Caco-2 (cell line): ENCODE measurements at regions of chr5 and their contacts with region 1.

Region 1: DNA sequence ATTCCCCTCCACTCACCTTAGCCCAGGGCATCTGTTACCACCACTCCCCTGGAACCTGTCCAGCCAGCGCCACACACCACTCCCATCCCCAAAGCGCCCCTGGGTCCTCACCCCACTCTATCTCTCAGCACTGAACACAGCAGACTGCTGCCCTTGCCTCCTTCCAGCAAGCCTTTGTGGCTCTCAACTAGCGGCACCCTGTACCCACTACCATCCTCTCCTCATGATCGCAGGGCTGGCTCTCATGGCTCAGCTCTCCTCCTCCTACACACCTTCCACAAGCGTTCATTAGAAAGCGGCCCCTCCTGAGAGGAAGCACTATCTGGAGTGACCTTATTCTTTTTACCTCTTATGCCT is 13.3 kb upstream of the BASP1 start:
- DNase-seq: no peak
- H3K4me3 ChIP-seq: no peak overlapping the region
- H3K4me3 Mint-ChIP-seq: no peak overlapping the region
- H3K27ac Mint-ChIP-seq: no peak overlapping the region
- H3K4me1 ChIP-seq: no peaks in the 10 kb centered on the region
- H3K4me1 Mint-ChIP-seq: peaks cover 12% of the 10 kb centered on the region
- H3K27me3 ChIP-seq: no peaks in the 10 kb centered on the region
- H3K27me3 Mint-ChIP-seq: no peaks in the 10 kb centered on the region
- CTCF ChIP-seq: no peak

Region 2: DNA sequence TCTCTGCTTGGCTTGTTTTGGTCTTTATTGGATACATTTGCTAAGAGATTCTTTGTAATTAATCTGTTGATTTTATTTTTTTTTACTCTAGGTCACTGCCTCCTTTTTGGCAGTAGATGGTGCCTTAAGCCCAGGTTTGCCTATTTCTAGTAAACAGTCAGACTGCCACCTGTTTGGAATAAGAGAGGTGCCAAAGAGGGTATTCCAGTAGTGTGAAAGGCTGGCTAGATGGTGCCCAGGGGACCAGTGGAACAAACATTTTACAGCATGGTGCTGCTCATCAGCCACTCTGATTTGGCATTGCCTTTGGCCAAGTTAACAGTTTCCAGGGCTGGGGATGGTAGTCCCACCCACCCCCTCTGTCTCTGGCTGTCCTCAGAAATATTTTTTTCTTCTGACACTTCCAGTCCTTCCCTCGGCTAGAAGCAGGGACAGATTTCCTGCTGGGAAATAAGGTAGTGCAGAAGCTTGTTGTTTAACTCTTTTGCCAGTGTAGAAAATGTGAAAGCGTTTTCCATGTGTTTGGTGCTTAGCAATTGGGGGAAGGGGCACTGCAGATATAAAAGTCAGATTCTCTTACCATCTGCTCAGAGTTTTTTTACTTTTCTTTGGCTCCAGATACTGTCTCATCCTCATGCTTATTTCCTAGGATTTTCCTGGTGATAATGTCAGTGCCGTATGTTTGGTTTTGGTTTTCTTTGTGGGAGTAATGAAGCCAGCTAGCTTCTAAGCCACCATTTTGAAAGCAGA is 1740.7 kb before region 1 on chr5:
- CTCF ChIA-PET with region 1: no interaction called
- POLR2A ChIA-PET with region 1: no interaction called
- intact Hi-C with region 1: no loop called
- DNase-seq: no peak
- H3K4me3 ChIP-seq: no peak overlapping the region
- H3K4me3 Mint-ChIP-seq: no peak overlapping the region
- H3K27ac Mint-ChIP-seq: no peak overlapping the region
- H3K4me1 ChIP-seq: no peaks in the 10 kb centered on the region
- H3K4me1 Mint-ChIP-seq: no peaks in the 10 kb centered on the region
- H3K27me3 ChIP-seq: no peaks in the 10 kb centered on the region
- H3K27me3 Mint-ChIP-seq: no peaks in the 10 kb centered on the region
- CTCF ChIP-seq: no peak

Region 3: GRCh38 chr5:16160706-16161105 is 1043.4 kb before region 1 on chr5:
- CTCF ChIA-PET with region 1: no interaction called
- POLR2A ChIA-PET with region 1: no interaction called
- intact Hi-C with region 1: loop called (anchors 1 kb)
- DNase-seq: peak; percentile 47 to 61
- H3K4me3 ChIP-seq: no peak overlapping the region
- H3K4me3 Mint-ChIP-seq: no peak overlapping the region
- H3K27ac Mint-ChIP-seq: no peak overlapping the region
- H3K4me1 ChIP-seq: no peaks in the 10 kb centered on the region
- H3K4me1 Mint-ChIP-seq: no peaks in the 10 kb centered on the region
- H3K27me3 ChIP-seq: no peaks in the 10 kb centered on the region
- H3K27me3 Mint-ChIP-seq: peaks cover 7% of the 10 kb centered on the region
- CTCF ChIP-seq: peak; percentile 67 to 79

Region 4: DNA sequence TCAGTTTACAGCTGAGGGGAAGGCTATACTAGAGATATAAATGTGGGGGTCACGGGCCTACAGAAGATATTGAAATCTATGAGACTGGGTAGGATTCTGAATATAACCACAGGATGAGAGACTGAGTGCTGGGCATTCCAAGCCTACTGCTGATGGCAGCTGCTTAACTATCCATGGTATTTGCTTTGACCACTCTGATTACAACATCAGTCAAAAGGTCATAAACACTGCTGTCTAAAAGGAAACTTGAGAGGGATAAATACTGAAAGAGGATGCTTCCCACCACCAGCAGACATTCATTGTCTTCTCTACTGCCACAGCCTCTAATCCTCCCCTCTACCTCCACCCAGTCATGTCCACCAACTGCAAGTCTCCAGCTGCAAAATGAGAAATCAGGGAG is 742.3 kb before region 1 on chr5:
- CTCF ChIA-PET with region 1: no interaction called
- POLR2A ChIA-PET with region 1: no interaction called
- intact Hi-C with region 1: loop called (anchors 1 kb)
- DNase-seq: peak in 1 of 2 experiments; percentile 14
- H3K4me3 ChIP-seq: no peak overlapping the region
- H3K4me3 Mint-ChIP-seq: no peak overlapping the region
- H3K27ac Mint-ChIP-seq: peak overlapping the region; percentile 7
- H3K4me1 ChIP-seq: peaks cover 18% of the 10 kb centered on the region; the same call in 1 of the 2 replicates
- H3K4me1 Mint-ChIP-seq: peaks cover 41% of the 10 kb centered on the region
- H3K27me3 ChIP-seq: no peaks in the 10 kb centered on the region
- H3K27me3 Mint-ChIP-seq: no peaks in the 10 kb centered on the region
- CTCF ChIP-seq: no peak

Region 5: GRCh38 chr5:16489322-16489791 is 714.8 kb before region 1 on chr5:
- CTCF ChIA-PET with region 1: no interaction called
- POLR2A ChIA-PET with region 1: no interaction called
- intact Hi-C with region 1: loop called (anchors 1 kb)
- DNase-seq: peak in 1 of 2 experiments; percentile 48
- H3K4me3 ChIP-seq: no peak overlapping the region
- H3K4me3 Mint-ChIP-seq: no peak overlapping the region
- H3K27ac Mint-ChIP-seq: peak overlapping the region; percentile 54
- H3K4me1 ChIP-seq: peaks cover 52% of the 10 kb centered on the region
- H3K4me1 Mint-ChIP-seq: peaks cover 31% of the 10 kb centered on the region
- H3K27me3 ChIP-seq: no peaks in the 10 kb centered on the region
- H3K27me3 Mint-ChIP-seq: no peaks in the 10 kb centered on the region
- CTCF ChIP-seq: peak; percentile 75 to 79

Region 6: DNA sequence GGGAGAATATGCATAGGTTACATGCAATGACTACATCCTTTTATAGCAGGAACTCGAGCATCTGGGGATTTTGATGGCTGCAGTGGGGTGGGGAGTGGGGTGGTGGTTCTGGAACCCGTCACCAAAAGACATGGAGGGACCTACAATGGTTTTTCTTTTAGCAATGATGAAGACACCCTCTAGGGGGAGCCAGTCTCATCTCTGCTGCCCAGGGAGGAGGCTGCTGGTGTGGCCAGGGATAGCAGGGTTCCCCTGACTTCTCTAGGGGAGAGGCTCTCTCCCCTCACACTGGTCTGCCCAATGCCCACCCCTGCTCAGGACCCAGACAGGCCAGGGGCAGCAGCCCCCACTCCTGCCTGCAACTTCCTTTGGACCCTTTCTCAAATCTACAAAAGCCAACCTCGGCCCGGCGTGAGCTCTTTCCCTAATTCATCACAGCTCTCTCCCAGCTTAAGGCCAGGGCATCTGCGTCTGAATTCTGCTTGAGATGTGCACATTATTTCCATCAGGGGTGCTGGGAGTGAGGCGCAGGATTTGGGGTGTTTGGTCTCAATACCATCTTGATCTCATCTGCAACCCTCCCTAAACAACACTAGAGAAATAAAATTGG is 513.8 kb before region 1 on chr5:
- CTCF ChIA-PET with region 1: no interaction called
- POLR2A ChIA-PET with region 1: no interaction called
- intact Hi-C with region 1: loop called (anchors 1 kb)
- DNase-seq: peak; percentile 54 to 76
- H3K4me3 ChIP-seq: no peak overlapping the region
- H3K4me3 Mint-ChIP-seq: no peak overlapping the region
- H3K27ac Mint-ChIP-seq: peak overlapping the region; percentile 13
- H3K4me1 ChIP-seq: no peaks in the 10 kb centered on the region
- H3K4me1 Mint-ChIP-seq: no peaks in the 10 kb centered on the region
- H3K27me3 ChIP-seq: no peaks in the 10 kb centered on the region
- H3K27me3 Mint-ChIP-seq: no peaks in the 10 kb centered on the region
- CTCF ChIP-seq: peak; percentile 79 to 81

Region 7: GRCh38 chr5:16791036-16791705 is 412.9 kb before region 1 on chr5:
- CTCF ChIA-PET with region 1: interaction called, 4 read pairs
- POLR2A ChIA-PET with region 1: no interaction called
- intact Hi-C with region 1: loop called (anchors 1 kb)
- DNase-seq: peak in 1 of 2 experiments; percentile 63
- H3K4me3 ChIP-seq: no peak overlapping the region
- H3K4me3 Mint-ChIP-seq: no peak overlapping the region
- H3K27ac Mint-ChIP-seq: no peak overlapping the region
- H3K4me1 ChIP-seq: no peaks in the 10 kb centered on the region
- H3K4me1 Mint-ChIP-seq: no peaks in the 10 kb centered on the region
- H3K27me3 ChIP-seq: no peaks in the 10 kb centered on the region; the same call in 1 of the 2 replicates
- H3K27me3 Mint-ChIP-seq: no peaks in the 10 kb centered on the region
- CTCF ChIP-seq: peak; percentile 65 to 73

Region 8: DNA sequence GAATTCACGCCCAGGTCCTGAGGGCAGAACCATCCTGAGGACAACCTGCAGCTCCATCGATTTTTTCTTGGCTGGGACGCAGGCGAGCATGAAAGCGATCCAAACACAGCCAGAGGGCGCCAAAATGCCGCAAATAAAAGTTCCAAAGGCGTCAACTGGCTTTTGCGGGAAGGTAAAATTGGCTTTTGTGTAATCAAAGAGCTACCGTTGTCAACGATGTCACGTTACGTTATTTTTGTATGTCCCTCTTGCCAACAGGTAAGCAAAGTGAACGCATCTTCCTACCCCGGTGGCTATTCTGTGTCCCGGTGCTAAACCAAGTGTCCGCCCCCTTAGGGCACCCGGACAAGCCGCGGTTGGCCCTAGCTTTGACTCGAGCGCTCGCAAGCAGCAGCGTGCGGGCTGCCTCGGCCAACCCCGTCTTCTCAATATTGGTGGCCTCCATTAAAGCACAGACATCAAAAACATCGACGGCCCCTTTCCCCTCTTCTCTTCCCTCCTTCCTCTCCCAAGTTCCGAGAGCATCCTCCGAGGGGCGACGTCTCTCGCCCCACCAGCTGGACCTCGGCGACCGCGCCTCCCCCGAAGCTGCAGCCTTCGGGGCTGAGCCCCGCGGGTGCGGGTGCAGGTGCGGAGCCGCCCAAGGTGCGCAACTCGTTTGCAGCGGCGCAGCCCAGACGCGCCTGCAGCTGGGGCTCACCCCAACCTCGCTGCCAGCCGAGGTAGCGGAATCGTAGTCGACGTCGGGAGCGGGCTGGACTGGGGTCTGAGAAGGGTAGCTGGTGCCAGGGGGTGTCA is 12.3 kb after region 1 on chr5:
- CTCF ChIA-PET with region 1: no interaction called
- POLR2A ChIA-PET with region 1: no interaction called
- intact Hi-C with region 1: no loop called
- DNase-seq: peak; percentile 82 to 87
- H3K4me3 ChIP-seq: peak overlapping the region; percentile 65
- H3K4me3 Mint-ChIP-seq: peak overlapping the region; percentile 96
- H3K27ac Mint-ChIP-seq: peak overlapping the region; percentile 36
- H3K4me1 ChIP-seq: peaks cover 10% of the 10 kb centered on the region
- H3K4me1 Mint-ChIP-seq: peaks cover 14% of the 10 kb centered on the region
- H3K27me3 ChIP-seq: no peaks in the 10 kb centered on the region
- H3K27me3 Mint-ChIP-seq: no peaks in the 10 kb centered on the region
- CTCF ChIP-seq: peak; percentile 77 to 85

Region 9: GRCh38 chr5:17813214-17813613 is 609.1 kb after region 1 on chr5:
- CTCF ChIA-PET with region 1: no interaction called
- POLR2A ChIA-PET with region 1: no interaction called
- intact Hi-C with region 1: no loop called
- DNase-seq: no peak
- H3K4me3 ChIP-seq: no peak overlapping the region
- H3K4me3 Mint-ChIP-seq: no peak overlapping the region
- H3K27ac Mint-ChIP-seq: no peak overlapping the region
- H3K4me1 ChIP-seq: 0 out of 2 replicates have a peak, but pooled peaks cover 4% of the 10 kb centered on the region
- H3K4me1 Mint-ChIP-seq: no peaks in the 10 kb centered on the region
- H3K27me3 ChIP-seq: no peaks in the 10 kb centered on the region
- H3K27me3 Mint-ChIP-seq: no peaks in the 10 kb centered on the region
- CTCF ChIP-seq: no peak